CD8-positive, alpha-beta memory T cell (primary cell): ENCODE measurements at regions of chr7 and their contacts with region 1.

Region 1: GRCh38 chr7:30740424-30741181 is 11.3 kb upstream of the INMT start:
- DNase-seq: peak; percentile 62 to 81 (median 71)
- H3K4me3 ChIP-seq: peak overlapping the region; percentile 18
- H3K4me3 Mint-ChIP-seq: peak overlapping the region in 1 of 7 donors; percentile 52
- H3K27ac ChIP-seq: no peak overlapping the region
- H3K27ac Mint-ChIP-seq: peak overlapping the region in 7 of 8 donors; percentile 49 to 80 (median 63)
- H3K4me1 ChIP-seq: peaks cover 46% of the 10 kb centered on the region
- H3K4me1 Mint-ChIP-seq: peaks cover 41 to 58% (median 42%) of the 10 kb centered on the region in 3 donors
- H3K27me3 ChIP-seq: no peaks in the 10 kb centered on the region
- H3K27me3 Mint-ChIP-seq: peaks cover 0 to 3% of the 10 kb centered on the region in 2 donors

Region 2: GRCh38 chr7:30548762-30549344 is 191.8 kb before region 1 on chr7:
- CTCF ChIA-PET with region 1: interaction called, 10 read pairs
- POLR2A ChIA-PET with region 1: no interaction called
- DNase-seq: peak in 2 of 5 donors; percentile 20 to 56
- H3K4me3 ChIP-seq: no peak overlapping the region
- H3K4me3 Mint-ChIP-seq: no peak overlapping the region
- H3K27ac ChIP-seq: no peak overlapping the region
- H3K27ac Mint-ChIP-seq: peak overlapping the region in 1 of 8 donors; percentile 37
- H3K4me1 ChIP-seq: no peaks in the 10 kb centered on the region
- H3K4me1 Mint-ChIP-seq: peaks cover 0 to 3% (median 1%) of the 10 kb centered on the region in 3 donors
- H3K27me3 ChIP-seq: no peaks in the 10 kb centered on the region
- H3K27me3 Mint-ChIP-seq: no peaks in the 10 kb centered on the region

Region 3: GRCh38 chr7:30564243-30564892 is 176.2 kb before region 1 on chr7:
- CTCF ChIA-PET with region 1: interaction called, 17 read pairs
- POLR2A ChIA-PET with region 1: no interaction called
- DNase-seq: peak; percentile 52 to 78 (median 62)
- H3K4me3 ChIP-seq: no peak overlapping the region
- H3K4me3 Mint-ChIP-seq: no peak overlapping the region
- H3K27ac ChIP-seq: no peak overlapping the region
- H3K27ac Mint-ChIP-seq: peak overlapping the region in 2 of 8 donors; percentile 2 to 53
- H3K4me1 ChIP-seq: no peaks in the 10 kb centered on the region
- H3K4me1 Mint-ChIP-seq: peaks cover 0 to 2% (median 0%) of the 10 kb centered on the region in 3 donors
- H3K27me3 ChIP-seq: no peaks in the 10 kb centered on the region
- H3K27me3 Mint-ChIP-seq: no peaks in the 10 kb centered on the region

Region 4: DNA sequence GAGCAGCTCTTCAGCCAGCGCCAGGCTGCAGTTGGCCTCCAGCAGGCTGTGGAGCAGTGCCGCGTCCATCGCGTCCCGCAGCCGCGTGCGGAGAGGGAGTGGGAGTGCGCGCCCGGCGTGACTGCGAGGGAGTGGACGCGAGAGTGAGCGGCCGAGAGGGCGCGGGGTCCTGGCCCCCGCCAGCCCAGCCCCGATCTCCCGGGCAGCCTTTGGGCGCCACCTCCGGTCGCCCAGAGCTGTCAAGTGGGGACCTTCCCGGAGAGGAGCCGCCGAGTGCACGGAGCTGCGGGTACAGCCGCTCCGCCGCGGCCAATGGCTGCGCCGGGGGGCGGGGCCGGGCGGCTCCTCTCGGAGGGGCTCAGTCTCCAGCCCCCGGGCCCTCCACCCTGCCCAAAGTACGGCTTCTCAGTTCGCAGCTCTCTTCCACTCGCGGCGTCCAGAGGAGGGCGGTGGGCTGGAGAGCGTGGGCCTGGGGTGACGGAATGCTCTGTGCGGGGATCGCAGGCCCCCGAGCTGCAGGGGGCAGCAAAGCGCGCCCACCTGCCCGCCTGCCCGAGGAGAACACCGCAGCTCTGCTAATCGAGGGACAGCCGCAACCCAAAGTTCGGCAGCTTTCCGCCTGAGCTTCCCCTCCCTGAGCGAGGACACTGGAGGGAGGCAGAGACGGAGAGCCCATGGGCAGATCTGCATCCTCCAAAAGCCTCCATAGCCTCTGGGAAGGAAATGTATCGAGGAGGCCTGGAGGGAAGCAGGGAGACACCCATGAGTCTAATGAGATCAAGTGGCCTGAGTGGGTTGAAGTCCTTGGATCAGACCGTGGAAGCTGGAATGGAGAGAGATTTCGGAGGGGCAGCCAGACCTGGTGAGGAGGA is 58.2 kb before region 1 on chr7 and contains the start of gene CRHR2:
- CTCF ChIA-PET with region 1: interaction called, 70 read pairs
- POLR2A ChIA-PET with region 1: no interaction called
- DNase-seq: peak in 4 of 5 donors; percentile 13 to 50 (median 19)
- H3K4me3 ChIP-seq: peak within 1 kb of the TSS; percentile 19
- H3K4me3 Mint-ChIP-seq: peak within 1 kb of the TSS; percentile 63 to 91 (median 77)
- H3K27ac ChIP-seq: no peak within 1 kb of the TSS
- H3K27ac Mint-ChIP-seq: peak within 1 kb of the TSS in 1 of 8 donors; percentile 6
- H3K4me1 ChIP-seq: peaks cover 8% of the 10 kb centered on the region
- H3K4me1 Mint-ChIP-seq: peaks cover 10 to 13% (median 13%) of the 10 kb centered on the region in 3 donors
- H3K27me3 ChIP-seq: peaks cover 34% of the 10 kb centered on the region
- H3K27me3 Mint-ChIP-seq: peaks cover 34 to 73% of the 10 kb centered on the region in 2 donors
- total RNA-seq, gene CRHR2: not detected

Region 5: DNA sequence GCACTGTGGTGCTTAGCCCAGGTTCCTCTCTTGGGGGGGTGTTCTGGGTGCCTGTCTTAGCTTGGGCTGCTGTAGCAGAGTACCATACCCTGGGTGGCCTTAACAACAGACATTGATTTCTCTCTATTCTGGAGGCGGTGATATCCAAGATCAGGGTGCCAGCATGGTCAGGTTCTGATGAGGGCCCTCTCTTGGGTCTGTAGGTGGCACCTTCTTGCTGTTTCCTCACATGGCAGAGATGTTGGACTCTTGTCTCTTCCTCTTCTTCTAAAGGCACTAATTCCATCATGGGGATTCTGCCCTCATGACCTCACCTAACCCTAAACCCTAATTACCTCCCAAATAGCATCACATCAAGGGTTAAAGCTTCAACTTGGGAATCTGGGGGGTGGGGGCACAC is 38.4 kb before region 1 on chr7:
- CTCF ChIA-PET with region 1: interaction called, 89 read pairs
- POLR2A ChIA-PET with region 1: interaction called, 3 read pairs
- DNase-seq: peak in 2 of 5 donors; percentile 24 to 29
- H3K4me3 ChIP-seq: no peak overlapping the region
- H3K4me3 Mint-ChIP-seq: no peak overlapping the region
- H3K27ac ChIP-seq: no peak overlapping the region
- H3K27ac Mint-ChIP-seq: peak overlapping the region in 2 of 8 donors; percentile 46 to 74
- H3K4me1 ChIP-seq: no peaks in the 10 kb centered on the region
- H3K4me1 Mint-ChIP-seq: peaks cover 0 to 7% (median 3%) of the 10 kb centered on the region in 3 donors
- H3K27me3 ChIP-seq: no peaks in the 10 kb centered on the region
- H3K27me3 Mint-ChIP-seq: peaks cover 0 to 6% of the 10 kb centered on the region in 2 donors

Region 6: GRCh38 chr7:30708976-30709375 is 31.6 kb before region 1 on chr7:
- CTCF ChIA-PET with region 1: interaction called, 89 read pairs
- POLR2A ChIA-PET with region 1: interaction called, 3 read pairs
- DNase-seq: no peak
- H3K4me3 ChIP-seq: no peak overlapping the region
- H3K4me3 Mint-ChIP-seq: no peak overlapping the region
- H3K27ac ChIP-seq: no peak overlapping the region
- H3K27ac Mint-ChIP-seq: no peak overlapping the region
- H3K4me1 ChIP-seq: no peaks in the 10 kb centered on the region
- H3K4me1 Mint-ChIP-seq: no peaks in the 10 kb centered on the region
- H3K27me3 ChIP-seq: no peaks in the 10 kb centered on the region
- H3K27me3 Mint-ChIP-seq: peaks cover 0 to 2% of the 10 kb centered on the region in 2 donors

Region 7: GRCh38 chr7:30727061-30727945 is 13.3 kb before region 1 on chr7:
- CTCF ChIA-PET with region 1: interaction called, 168 read pairs
- POLR2A ChIA-PET with region 1: interaction called, 26 read pairs
- DNase-seq: peak; percentile 35 to 81 (median 74)
- H3K4me3 ChIP-seq: peak overlapping the region; percentile 73
- H3K4me3 Mint-ChIP-seq: peak overlapping the region; percentile 70 to 91 (median 85)
- H3K27ac ChIP-seq: peak overlapping the region; percentile 34
- H3K27ac Mint-ChIP-seq: peak overlapping the region; percentile 64 to 95 (median 88)
- H3K4me1 ChIP-seq: peaks cover 52% of the 10 kb centered on the region
- H3K4me1 Mint-ChIP-seq: peaks cover 44 to 65% (median 54%) of the 10 kb centered on the region in 3 donors
- H3K27me3 ChIP-seq: no peaks in the 10 kb centered on the region
- H3K27me3 Mint-ChIP-seq: peaks cover 0 to 1% of the 10 kb centered on the region in 2 donors